ENCODE measurements at regions of chrX and their contacts with region 1.

Region 1: DNA sequence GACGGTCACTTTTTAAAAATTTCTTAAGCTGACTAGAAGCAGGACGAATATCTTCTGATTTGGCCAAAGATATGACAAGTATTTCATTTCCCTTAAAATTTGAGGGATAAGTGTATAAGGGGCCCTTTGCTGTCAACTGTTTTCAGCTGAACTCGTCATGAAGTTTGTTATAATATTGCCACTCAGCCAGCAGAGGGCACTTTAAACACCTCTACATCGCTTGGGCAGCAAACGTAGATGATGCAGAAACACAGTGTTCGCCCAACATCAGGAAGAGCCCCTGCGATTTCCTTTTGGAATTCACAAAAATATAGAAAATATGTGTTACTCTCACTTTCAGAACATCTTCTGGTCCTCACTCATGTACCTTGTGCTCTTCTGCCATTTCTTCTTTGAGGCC is 435.7 kb upstream of the FMR1 start:
- DNase-seq: peak; percentile 58
- H3K4me3 Mint-ChIP-seq: no peak overlapping the region
- H3K27ac Mint-ChIP-seq: no peak overlapping the region
- H3K4me1 Mint-ChIP-seq: peaks cover 5% of the 10 kb centered on the region
- H3K27me3 Mint-ChIP-seq: no peaks in the 10 kb centered on the region
- CTCF ChIP-seq: peak; percentile 35

Region 2: DNA sequence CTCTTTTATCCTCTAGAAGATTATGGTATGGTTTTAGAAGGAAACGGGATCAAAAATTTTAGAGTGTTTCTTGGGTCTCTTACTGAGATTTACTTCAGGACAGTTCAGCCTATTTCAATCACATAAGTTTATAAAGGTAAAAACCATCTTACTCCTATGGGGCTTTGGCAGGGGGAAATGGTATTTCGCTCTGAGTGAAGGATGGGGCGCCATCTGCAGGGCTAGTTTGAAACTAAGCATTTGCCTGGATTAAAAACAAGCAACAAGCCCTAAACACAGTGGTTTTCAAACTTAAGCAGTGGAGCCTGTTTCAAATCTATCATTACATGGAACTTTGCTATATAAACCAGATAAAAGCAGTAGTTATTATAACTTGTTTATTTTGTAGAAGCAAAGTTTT is 74.2 kb after region 1 on chrX:
- CTCF ChIA-PET with region 1: interaction called, 12 read pairs
- POLR2A ChIA-PET with region 1: no interaction called
- intact Hi-C with region 1: no loop called
- DNase-seq: peak; percentile 59
- H3K4me3 Mint-ChIP-seq: no peak overlapping the region
- H3K27ac Mint-ChIP-seq: no peak overlapping the region
- H3K4me1 Mint-ChIP-seq: peaks cover 6% of the 10 kb centered on the region
- H3K27me3 Mint-ChIP-seq: no peaks in the 10 kb centered on the region
- CTCF ChIP-seq: peak; percentile 37

Region 3: DNA sequence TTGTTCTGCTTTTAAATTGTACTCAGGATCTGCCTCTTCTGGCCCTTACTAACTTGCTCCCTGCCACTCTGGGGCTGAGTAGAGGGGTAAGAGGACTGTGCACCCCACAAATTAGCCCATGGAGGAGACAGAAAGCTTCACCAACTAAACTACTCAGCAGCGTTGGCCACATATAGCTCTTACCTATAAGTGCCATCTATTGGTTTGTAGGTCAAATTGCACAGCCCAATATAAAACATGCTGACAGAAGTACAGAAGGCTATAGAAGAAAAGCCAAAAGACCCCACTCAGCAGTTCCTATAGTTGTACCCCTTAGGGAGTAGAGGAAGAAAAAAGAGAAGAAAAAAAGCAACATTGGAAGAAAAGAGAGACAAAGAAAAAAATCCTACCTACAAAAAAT is 94.5 kb after region 1 on chrX:
- CTCF ChIA-PET with region 1: interaction called, 13 read pairs
- POLR2A ChIA-PET with region 1: no interaction called
- intact Hi-C with region 1: no loop called
- DNase-seq: peak; percentile 12
- H3K4me3 Mint-ChIP-seq: no peak overlapping the region
- H3K27ac Mint-ChIP-seq: no peak overlapping the region
- H3K4me1 Mint-ChIP-seq: peaks cover 4% of the 10 kb centered on the region
- H3K27me3 Mint-ChIP-seq: no peaks in the 10 kb centered on the region
- CTCF ChIP-seq: peak; percentile 15

Region 4: DNA sequence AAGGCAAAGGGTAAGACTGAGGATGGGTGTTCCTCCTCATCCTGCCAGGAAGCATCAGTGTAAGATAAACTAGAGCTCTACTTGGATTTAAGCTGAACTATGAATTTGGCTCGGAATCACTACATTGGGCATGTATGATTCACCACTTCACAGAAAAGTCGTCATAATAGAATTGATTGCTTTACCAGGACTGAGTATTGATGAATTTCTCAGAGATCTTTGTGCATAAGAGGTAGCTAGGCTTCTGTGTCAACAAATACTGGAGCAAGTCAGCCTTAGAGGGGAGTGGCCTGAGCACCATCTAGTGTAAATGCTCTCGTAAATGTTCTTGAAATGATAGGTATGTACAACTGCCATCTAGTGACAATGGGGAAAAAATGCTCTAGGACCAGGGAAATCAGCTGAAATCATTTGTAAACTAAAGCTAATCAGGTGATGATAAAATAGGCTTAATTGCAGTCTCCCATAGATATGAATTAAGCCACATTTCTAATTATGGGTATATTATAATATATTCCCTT is 126.2 kb after region 1 on chrX:
- CTCF ChIA-PET with region 1: interaction called, 24 read pairs
- POLR2A ChIA-PET with region 1: no interaction called
- intact Hi-C with region 1: no loop called
- DNase-seq: peak; percentile 30
- H3K4me3 Mint-ChIP-seq: no peak overlapping the region
- H3K27ac Mint-ChIP-seq: no peak overlapping the region
- H3K4me1 Mint-ChIP-seq: no peaks in the 10 kb centered on the region
- H3K27me3 Mint-ChIP-seq: no peaks in the 10 kb centered on the region
- CTCF ChIP-seq: peak; percentile 12

Region 5: GRCh38 chrX:147803948-147804347 is 327.9 kb after region 1 on chrX:
- CTCF ChIA-PET with region 1: interaction called, 33 read pairs
- POLR2A ChIA-PET with region 1: interaction called, 3 read pairs
- intact Hi-C with region 1: loop called (anchors 1 kb)
- DNase-seq: peak; percentile 54
- H3K4me3 Mint-ChIP-seq: no peak overlapping the region
- H3K27ac Mint-ChIP-seq: peak overlapping the region; percentile 16
- H3K4me1 Mint-ChIP-seq: no peaks in the 10 kb centered on the region
- H3K27me3 Mint-ChIP-seq: no peaks in the 10 kb centered on the region
- CTCF ChIP-seq: peak; percentile 39

Region 6: DNA sequence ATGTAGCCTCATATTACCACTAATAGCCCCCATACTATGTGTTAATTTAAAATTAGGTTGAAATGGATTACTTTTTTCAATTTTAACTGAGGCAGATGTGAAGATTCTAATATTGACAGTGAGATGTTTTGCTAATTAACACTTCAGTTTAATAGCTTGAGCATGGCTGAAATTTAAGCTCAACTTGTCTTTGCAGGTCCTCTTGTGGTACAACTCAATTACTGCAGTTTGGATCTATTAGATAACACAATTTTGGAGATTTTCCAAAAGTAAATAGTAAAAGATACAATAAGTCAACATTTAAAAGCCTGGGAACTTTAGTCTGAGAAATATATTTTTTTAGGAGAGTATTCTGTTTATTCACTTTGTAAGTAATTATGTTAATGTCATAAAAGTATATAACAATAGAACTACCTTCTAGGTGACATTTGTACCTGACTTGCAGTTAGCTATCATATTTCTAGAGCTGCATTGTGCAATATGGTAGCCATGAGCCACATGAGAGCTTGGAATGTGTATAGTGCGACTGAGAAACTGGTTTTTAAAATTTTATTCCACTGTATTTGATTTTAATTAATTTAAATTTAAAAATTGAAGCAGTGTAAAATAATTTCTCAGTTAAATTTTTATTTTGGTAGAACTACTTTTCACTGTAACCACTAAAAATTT is 362.6 kb after region 1 on chrX:
- CTCF ChIA-PET with region 1: interaction called, 14 read pairs
- POLR2A ChIA-PET with region 1: no interaction called
- intact Hi-C with region 1: no loop called
- DNase-seq: peak; percentile 33
- H3K4me3 Mint-ChIP-seq: no peak overlapping the region
- H3K27ac Mint-ChIP-seq: no peak overlapping the region
- H3K4me1 Mint-ChIP-seq: no peaks in the 10 kb centered on the region
- H3K27me3 Mint-ChIP-seq: no peaks in the 10 kb centered on the region
- CTCF ChIP-seq: peak; percentile 39

Measured in MCF 10A (cell line).